ENCODE measurements at regions of chr10 and their contacts with region 1.

Region 1: DNA sequence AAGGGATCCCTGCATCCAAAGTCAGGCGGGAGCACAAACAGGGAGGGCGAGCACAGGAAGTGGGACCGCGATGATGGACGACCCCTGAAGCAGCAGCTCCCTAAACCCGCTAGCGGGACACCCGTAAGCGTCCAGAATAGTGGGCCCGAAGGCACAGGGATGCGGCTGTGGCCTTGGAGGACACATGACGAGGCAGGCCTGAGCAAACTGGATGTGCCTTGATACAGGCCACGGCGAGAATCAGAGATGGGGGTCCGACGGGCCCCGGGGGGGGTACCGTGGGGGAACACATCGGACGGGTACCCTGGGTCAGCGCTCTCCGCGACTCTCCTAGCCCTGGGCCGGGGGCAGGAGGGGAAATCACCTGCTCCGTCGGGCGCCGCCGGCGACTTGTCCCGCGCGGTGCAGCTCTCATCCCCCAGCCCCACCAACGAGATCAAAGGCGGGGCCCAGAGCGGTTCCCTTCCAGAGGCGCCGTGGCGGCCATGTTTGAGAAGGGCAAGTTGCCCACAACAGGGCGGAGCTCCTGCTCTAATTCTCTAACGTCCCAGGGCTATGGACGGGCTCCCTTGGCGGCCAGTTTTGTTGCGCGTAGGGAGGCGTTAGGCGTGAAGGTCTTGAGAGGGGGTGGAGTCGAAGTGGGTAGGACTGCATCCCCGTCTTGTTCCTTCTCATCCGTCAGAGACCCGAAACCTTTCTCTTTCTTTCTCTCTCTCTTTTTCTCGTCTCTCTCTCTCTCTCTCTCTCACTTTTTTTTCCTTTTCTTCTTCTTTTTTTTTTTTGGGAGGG is at the start of gene CUEDC2:
- DNase-seq: peak; percentile 100
- H3K4me3 Mint-ChIP-seq: peak within 1 kb of the TSS; percentile 85
- H3K27ac Mint-ChIP-seq: peak within 1 kb of the TSS; percentile 81
- H3K4me1 Mint-ChIP-seq: peaks cover 48% of the 10 kb centered on the region
- H3K27me3 Mint-ChIP-seq: no peaks in the 10 kb centered on the region
- total RNA-seq, gene CUEDC2: 64.2 and 67.6 TPM in 2 replicates

Region 2: GRCh38 chr10:102450194-102450938 is 18.0 kb after region 1 on chr10:
- intact Hi-C with region 1: loop called (anchors 1 kb)
- DNase-seq: peak; percentile 97
- H3K4me3 Mint-ChIP-seq: peak overlapping the region; percentile 98
- H3K27ac Mint-ChIP-seq: peak overlapping the region; percentile 97
- H3K4me1 Mint-ChIP-seq: peaks cover 29% of the 10 kb centered on the region
- H3K27me3 Mint-ChIP-seq: no peaks in the 10 kb centered on the region

Region 3: DNA sequence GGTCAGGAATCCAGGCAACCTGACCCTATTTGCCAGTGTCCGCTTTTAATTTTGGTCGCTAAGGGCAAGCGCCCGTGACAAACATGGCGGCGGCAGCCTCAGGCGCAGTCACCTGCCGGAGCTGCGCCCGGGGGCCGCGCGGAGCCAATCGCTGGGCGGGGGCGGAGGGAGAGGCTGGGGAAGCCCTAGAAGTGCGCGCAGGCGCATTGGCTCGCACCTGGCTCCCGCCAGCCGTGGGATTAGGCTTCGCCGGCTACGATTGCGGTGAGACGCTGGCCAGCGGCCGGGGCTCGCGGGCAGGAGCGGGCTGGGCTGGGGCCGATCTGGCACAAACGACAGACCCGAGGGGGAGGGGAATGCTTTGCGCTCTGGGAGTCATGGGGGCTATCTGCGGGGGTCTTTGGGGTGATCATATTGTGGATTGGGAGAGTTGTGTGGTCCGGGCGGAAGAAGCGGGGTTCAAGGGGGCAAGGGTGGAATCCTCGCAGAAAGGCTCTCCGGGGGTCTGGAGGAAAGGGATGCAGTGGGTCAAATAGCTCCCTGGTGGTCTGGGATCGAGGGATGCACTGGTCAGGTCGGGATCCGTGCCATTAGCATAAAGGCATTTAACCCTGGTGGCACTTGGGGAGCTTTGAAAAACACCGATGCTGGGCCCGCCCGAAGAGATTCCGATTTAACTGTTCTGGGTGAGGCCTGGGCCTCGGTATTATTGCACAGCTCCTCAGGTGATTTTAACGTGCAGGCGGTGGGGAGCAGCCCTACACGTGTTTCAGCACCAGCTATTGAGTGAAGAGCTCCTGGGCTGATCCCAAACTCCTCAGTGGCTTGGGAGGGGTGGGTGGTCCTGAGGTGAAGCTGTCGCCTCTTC is 29.1 kb after region 1 on chr10:
- intact Hi-C with region 1: loop called (anchors 1 kb)
- DNase-seq: peak; percentile 98
- H3K4me3 Mint-ChIP-seq: peak overlapping the region; percentile 88
- H3K27ac Mint-ChIP-seq: peak overlapping the region; percentile 88
- H3K4me1 Mint-ChIP-seq: peaks cover 28% of the 10 kb centered on the region
- H3K27me3 Mint-ChIP-seq: peaks cover 6% of the 10 kb centered on the region

Region 4: DNA sequence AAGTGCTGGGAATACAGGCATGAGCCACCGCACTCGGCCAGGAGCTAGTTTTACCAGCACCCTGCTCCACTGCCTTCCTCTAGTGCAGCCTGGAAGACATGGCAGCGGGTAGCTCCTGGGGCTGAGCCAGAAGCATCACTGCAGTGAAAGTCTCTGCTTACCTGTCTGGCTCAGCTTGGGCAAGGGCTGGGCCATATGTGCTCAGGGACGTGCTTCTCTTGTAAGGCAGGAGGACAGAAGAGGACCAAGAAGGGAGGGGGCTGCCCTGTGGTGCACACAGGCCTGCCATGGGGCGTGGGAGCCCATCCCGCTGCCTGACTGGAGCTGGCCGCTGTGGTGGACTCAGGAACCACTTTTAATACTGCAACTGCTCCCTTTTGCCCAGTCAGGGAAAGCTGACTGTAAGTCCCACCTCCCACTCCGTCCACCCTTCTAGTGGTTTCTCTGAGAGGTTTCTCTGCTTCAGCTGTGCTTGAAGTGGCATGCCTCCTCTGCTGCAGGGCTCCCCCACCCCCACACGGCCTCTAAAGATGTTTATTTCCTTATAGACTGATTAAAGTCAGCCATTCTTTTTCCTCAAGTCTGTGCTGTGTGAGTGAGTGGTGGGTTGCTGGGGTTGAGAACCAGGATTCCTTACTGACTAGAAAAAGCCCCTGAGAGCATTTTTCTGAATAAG is 44.2 kb after region 1 on chr10:
- intact Hi-C with region 1: loop called (anchors 2 kb)
- DNase-seq: no peak
- H3K4me3 Mint-ChIP-seq: no peak overlapping the region
- H3K27ac Mint-ChIP-seq: peak overlapping the region; percentile 70
- H3K4me1 Mint-ChIP-seq: peaks cover 22% of the 10 kb centered on the region
- H3K27me3 Mint-ChIP-seq: no peaks in the 10 kb centered on the region

Region 5: GRCh38 chr10:102869258-102870198 is 437.2 kb after region 1 on chr10 and contains the start of gene AS3MT:
- intact Hi-C with region 1: no loop called
- DNase-seq: peak; percentile 72
- H3K4me3 Mint-ChIP-seq: peak within 1 kb of the TSS; percentile 76
- H3K27ac Mint-ChIP-seq: no peak within 1 kb of the TSS
- H3K4me1 Mint-ChIP-seq: peaks cover 6% of the 10 kb centered on the region
- H3K27me3 Mint-ChIP-seq: peaks cover 22% of the 10 kb centered on the region
- total RNA-seq, gene AS3MT: 0.57 and 0.79 TPM in 2 replicates

Measured in activated CD4-positive, alpha-beta T cell treated with anti-CD3 and anti-CD28 coated beads, Interleukin-2, amount 10 ng/mL, durations not matched to agents 24 days and 14 days (primary cell).